ENCODE measurements at regions of chr17 and their contacts with region 1.

Region 1: DNA sequence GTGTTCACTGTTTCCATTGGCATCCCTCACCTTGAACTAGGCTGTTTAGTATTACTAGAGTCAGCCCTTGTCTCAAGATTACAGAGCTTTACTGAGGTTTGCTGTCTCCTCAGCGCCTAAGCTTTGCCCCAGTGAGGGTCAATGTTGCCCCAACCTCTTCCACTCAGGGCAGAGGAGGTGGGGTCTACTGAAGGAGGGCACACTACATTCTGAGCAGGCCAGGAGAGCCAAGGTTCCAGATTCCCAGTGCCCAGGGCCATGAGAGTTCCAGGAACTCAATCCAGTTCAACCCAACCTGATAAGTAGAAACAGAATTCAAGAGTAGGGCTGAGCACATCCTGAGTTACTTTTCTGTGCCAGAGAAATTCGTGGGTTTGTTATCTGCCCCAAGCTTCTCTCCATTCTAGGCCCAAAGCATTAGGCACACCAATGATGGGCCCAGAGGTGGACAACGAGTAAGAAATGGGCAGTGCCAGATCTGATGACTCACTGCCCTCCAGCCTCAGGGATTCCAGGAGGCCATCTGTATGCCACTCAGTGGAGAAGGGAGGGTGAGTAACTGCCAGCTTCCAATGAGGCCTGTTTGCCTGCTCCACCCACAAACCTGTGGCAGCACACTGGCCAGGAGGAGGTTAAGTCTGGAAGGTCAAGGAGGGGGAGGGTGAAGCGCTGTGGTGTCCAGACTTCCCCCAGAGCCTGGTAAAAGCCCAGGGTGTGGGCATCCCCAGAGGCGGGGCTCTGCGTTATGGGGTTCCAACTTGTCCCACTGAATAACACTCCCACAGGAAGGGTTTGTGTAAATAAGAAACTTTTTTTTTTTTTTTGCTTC is 8.3 kb downstream of the TUBG2 start:
- DNase-seq: peak; percentile 85
- H3K4me3 ChIP-seq: no peak overlapping the region
- H3K27ac ChIP-seq: peak overlapping the region; percentile 75 to 93
- H3K4me1 ChIP-seq: peaks cover 13 to 30% of the 10 kb centered on the region in 2 experiments
- H3K27me3 ChIP-seq: no peaks in the 10 kb centered on the region
- CTCF ChIP-seq: no peak
- EP300 ChIP-seq: peak in 1 of 2 experiments; percentile 53; a peak in 2 of 4 replicates
- RAD21 ChIP-seq: no peak; the same call in 1 of the 2 replicates

Region 2: DNA sequence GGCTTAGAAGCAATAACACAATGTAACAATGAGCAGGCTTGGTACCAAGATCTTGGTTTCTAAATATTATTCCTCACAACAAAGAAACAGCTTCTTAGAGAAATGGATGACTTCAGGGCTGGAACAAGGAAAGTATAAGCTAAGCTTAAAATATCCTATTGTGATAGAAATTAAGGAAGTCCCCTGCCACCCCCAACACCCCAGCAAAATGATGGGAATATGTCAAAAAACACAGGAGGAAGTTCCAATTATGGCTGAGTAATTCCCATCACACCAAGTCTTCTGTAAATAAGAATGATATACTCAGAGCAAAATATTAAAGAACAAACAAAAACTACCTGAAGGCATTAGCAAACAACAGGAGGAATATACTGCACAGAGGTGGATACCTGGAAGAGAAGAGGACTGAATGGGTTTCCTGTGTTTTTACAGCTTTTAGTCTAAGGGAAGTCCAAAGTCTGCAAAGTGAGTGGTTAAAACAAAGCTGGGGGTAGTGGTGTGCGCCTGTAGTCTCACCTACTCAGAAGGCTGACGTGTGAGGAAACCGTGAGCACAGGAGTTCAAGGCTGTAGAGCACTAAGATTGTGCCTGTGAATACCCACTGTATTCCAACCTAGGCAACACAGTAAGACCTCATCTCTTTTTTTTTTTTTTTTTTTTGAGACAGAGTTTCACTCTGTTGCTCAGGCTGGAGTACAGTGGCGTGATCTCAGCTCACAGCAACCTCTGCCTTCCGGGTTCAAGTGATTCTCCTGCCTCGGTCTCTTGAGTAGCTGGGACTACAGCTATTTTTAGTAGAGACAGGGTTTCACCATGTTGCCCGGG is 225.8 kb before region 1 on chr17:
- CTCF ChIA-PET with region 1: no interaction called
- POLR2A ChIA-PET with region 1: no interaction called
- DNase-seq: no peak
- H3K4me3 ChIP-seq: no peak overlapping the region
- H3K27ac ChIP-seq: no peak overlapping the region
- H3K4me1 ChIP-seq: no peaks in the 10 kb centered on the region
- H3K27me3 ChIP-seq: no peaks in the 10 kb centered on the region
- CTCF ChIP-seq: no peak
- EP300 ChIP-seq: no peak
- RAD21 ChIP-seq: no peak

Region 3: GRCh38 chr17:42618442-42619150 is 48.7 kb before region 1 on chr17:
- CTCF ChIA-PET with region 1: interaction called, 9 read pairs
- POLR2A ChIA-PET with region 1: interaction called, 12 read pairs
- DNase-seq: peak; percentile 55
- H3K4me3 ChIP-seq: no peak overlapping the region
- H3K27ac ChIP-seq: peak overlapping the region in 1 of 2 experiments; percentile 71; a peak in 2 of 4 replicates
- H3K4me1 ChIP-seq: peaks cover 0 to 16% of the 10 kb centered on the region in 2 experiments; a peak in 1 of 4 replicates
- H3K27me3 ChIP-seq: no peaks in the 10 kb centered on the region
- CTCF ChIP-seq: no peak
- EP300 ChIP-seq: no peak
- RAD21 ChIP-seq: peak; percentile 61

Region 4: GRCh38 chr17:42653179-42654124 is 13.9 kb before region 1 on chr17:
- CTCF ChIA-PET with region 1: interaction called, 7 read pairs
- POLR2A ChIA-PET with region 1: interaction called, 22 read pairs
- DNase-seq: peak; percentile 83
- H3K4me3 ChIP-seq: peak overlapping the region; percentile 32 to 40
- H3K27ac ChIP-seq: peak overlapping the region; percentile 87 to 93
- H3K4me1 ChIP-seq: peaks cover 0 to 12% of the 10 kb centered on the region in 2 experiments; a peak in 1 of 4 replicates
- H3K27me3 ChIP-seq: no peaks in the 10 kb centered on the region
- CTCF ChIP-seq: no peak
- EP300 ChIP-seq: peak in 1 of 2 experiments; percentile 97; a peak in 3 of 4 replicates
- RAD21 ChIP-seq: 0 out of 2 replicates have a peak, but pooled peaks have one; percentile 25